ENCODE measurements at regions of chr13 and their contacts with region 1.

Region 1: DNA sequence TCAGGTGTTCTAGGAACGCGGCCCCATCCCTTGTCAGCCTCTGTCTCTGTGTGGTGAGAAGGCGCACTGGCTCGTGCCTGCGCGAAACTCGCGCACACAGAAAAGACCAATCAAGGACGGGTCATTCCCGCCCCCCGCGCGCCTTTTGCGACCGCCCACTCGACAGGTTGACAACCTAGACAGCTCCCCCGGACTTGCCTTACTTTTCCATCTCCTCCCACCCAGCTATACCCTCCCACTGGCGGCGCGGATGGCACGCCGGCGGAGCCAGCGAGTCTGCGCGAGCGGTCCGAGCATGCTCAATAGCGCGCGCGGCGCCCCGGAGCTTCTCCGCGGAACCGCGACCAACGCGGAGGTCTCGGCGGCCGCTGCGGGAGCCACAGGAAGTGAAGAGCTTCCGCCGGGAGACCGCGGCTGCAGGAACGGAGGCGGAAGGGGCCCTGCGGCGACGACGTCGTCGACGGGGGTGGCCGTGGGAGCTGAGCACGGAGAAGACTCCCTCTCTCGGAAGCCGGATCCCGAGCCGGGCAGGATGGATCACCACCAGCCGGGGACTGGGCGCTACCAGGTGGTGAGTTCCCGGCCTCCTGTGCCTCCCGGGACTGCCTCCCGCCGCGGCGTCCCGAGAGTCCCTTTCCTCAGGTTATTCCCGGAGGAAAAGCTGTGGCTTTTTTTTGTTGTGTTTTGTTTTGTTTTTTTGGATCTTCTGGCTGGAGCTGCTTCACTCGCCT is at the start of gene NDFIP2:
- DNase-seq: peak; percentile 91

Region 2: GRCh38 chr13:79287939-79288795 is 193.0 kb before region 1 on chr13:
- CTCF ChIA-PET with region 1: no interaction called
- POLR2A ChIA-PET with region 1: no interaction called
- DNase-seq: no peak

Region 3: GRCh38 chr13:79382545-79383289 is 98.4 kb before region 1 on chr13:
- CTCF ChIA-PET with region 1: no interaction called
- POLR2A ChIA-PET with region 1: no interaction called
- DNase-seq: no peak

Region 4: GRCh38 chr13:79405829-79406596 is 75.1 kb before region 1 on chr13 and contains the start of gene RBM26:
- CTCF ChIA-PET with region 1: interaction called, 3 read pairs
- POLR2A ChIA-PET with region 1: interaction called, 13 read pairs
- DNase-seq: peak; percentile 99

Region 5: GRCh38 chr13:79423801-79424642 is 57.1 kb before region 1 on chr13:
- CTCF ChIA-PET with region 1: interaction called, 11 read pairs
- POLR2A ChIA-PET with region 1: interaction called, 14 read pairs
- DNase-seq: peak; percentile 60

Region 6: GRCh38 chr13:79468819-79469218 is 12.3 kb before region 1 on chr13:
- CTCF ChIA-PET with region 1: no interaction called
- POLR2A ChIA-PET with region 1: interaction called, 12 read pairs
- DNase-seq: no peak

Region 7: DNA sequence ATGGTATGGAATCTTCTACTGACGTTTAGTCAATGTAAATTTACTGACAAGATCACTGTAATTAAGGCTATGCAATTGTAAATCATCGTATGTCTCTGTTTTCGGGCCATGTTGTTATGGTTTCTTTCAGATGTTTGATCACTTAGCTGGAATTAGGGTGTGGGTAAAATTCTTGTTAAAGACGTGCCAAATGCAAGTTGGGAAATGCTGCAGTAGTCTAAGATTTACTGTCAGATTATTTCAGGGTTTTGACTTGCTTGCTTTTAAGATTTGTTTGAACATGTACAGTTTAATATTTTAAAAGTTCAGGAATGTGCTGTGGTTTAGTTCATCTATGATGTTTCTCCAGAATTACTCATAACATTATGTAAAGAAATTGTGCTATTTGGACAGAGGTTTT is 10.6 kb after region 1 on chr13:
- CTCF ChIA-PET with region 1: interaction called, 4 read pairs
- POLR2A ChIA-PET with region 1: interaction called, 35 read pairs
- DNase-seq: no peak

Region 8: DNA sequence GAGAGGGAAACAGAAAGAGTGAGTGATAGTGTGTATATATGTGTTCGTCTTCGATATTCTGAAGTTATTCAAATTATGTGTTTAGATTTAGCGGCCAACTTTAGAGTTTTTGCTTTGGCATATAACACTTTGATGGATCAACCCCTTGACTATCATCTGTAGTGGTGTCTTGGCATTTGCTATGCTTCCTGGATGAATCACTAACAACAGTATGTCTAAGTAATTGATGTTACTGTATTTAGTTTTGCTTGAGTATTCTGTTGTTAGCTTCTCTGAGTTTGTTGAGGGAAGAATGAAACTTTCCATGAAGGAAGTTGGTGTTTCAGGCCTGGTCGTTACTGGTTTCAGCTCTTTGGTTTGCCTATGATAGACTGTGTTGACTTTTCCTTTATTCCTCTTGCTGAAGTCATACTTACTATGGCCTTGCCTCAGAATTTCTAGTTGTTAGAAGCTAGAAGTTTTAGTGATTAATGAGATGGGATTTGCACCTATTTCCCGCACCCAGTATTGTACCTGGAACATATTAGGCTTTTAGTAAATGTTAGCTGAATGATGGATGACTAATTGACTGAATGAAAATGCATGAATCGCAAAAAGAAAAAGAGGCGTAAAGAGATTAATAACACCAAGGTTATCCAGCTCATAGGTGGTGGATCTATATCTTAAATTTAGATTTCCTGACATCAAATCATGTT is 20.6 kb after region 1 on chr13:
- CTCF ChIA-PET with region 1: no interaction called
- POLR2A ChIA-PET with region 1: interaction called, 14 read pairs
- DNase-seq: no peak

Region 9: DNA sequence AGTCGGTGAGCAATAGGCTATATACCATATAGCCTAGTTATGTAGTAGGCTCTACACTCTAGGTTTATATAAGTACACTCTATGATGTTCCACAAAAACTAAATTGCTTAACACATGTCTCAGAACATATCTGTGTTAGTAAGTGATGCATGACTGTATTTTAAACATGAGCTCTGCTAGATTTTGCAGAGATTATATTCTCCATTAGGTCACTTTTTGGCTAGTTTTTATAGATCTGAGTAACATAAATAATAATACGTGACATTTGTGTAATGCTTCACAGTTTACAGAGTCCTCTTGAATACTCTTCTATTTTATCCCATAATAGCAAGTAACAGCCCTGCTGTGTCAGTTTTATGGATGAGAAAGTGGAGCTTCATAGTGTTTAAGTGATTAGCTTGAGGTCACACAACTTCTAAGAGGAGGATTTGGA is 47.7 kb after region 1 on chr13:
- CTCF ChIA-PET with region 1: interaction called, 4 read pairs
- POLR2A ChIA-PET with region 1: interaction called, 24 read pairs
- DNase-seq: peak; percentile 73

Region 10: GRCh38 chr13:79775830-79776229 is 294.7 kb after region 1 on chr13:
- CTCF ChIA-PET with region 1: no interaction called
- POLR2A ChIA-PET with region 1: no interaction called
- DNase-seq: peak; percentile 68

Measured in HEK293T (cell line).